ENCODE measurements at regions of chr10 and their contacts with region 1.

Region 1: DNA sequence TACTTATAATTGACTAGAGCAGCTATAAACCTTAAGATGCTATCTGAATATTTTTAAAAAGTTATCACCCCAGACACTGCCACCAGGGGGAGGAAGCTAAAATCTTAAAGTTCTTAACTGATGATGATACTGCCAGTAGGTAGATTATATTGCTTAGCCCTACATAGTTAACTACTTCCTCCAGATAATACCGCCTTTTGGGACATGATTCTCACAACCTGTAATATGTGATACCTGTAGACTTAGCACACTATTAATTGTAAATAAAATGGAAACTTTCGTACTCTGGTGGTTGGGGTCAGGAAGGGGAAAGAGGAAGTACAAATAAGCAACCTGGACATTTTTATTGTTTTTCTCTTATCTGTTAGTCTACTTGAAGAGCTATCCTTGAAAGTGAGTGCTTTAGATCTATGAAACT is 268.9 kb downstream of the ADK start:
- DNase-seq: peak; percentile 19 to 53 (median 44)
- ATAC-seq: peak; percentile 60
- H3K4me3 ChIP-seq: no peak overlapping the region
- H3K27ac ChIP-seq: no peak overlapping the region
- H3K4me1 ChIP-seq: peaks cover 4 to 15% of the 10 kb centered on the region in 2 experiments; a peak in 3 of 5 replicates
- H3K27me3 ChIP-seq: no peaks in the 10 kb centered on the region
- CTCF ChIP-seq: peak in 2 of 3 experiments; percentile 22 to 51; a peak in 2 of 6 replicates
- EP300 ChIP-seq: no peak
- POLR2A ChIP-seq: no peak
- RAD21 ChIP-seq: peak in 1 of 2 experiments; percentile 28; a peak in 1 of 4 replicates

Region 2: GRCh38 chr10:74432841-74433594 is 13.1 kb after region 1 on chr10:
- CTCF ChIA-PET with region 1: no interaction called
- POLR2A ChIA-PET with region 1: interaction called, 24 read pairs
- in situ Hi-C with region 1: no loop called
- intact Hi-C with region 1: no loop called
- DNase-seq: peak in 3 of 4 experiments; percentile 15 to 33 (median 23)
- ATAC-seq: no peak; the same call in 2 of the 3 replicates
- H3K4me3 ChIP-seq: no peak overlapping the region
- H3K27ac ChIP-seq: no peak overlapping the region
- H3K4me1 ChIP-seq: peaks cover 0 to 4% of the 10 kb centered on the region in 2 experiments; a peak in 3 of 5 replicates
- H3K27me3 ChIP-seq: no peaks in the 10 kb centered on the region
- CTCF ChIP-seq: no peak
- EP300 ChIP-seq: no peak
- POLR2A ChIP-seq: no peak
- RAD21 ChIP-seq: no peak

Region 3: DNA sequence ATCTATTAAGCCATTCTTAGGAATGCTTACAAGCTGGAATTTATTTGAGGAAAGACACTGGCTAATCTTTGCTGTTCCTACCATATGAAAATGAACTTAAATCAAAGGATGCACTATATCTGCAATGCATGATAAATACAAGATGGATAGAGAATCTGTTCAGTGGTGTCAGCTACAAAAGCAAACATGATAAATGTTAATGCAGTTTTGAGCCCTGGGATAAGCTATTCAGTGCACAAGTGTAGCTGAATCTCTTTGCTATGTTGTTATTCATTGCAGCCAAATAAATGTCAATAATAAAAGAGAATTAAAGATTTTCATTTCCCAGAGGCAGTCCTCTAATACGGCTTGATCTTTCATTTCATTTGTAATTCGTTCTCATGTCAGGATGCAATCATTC is 182.6 kb after region 1 on chr10:
- CTCF ChIA-PET with region 1: no interaction called
- POLR2A ChIA-PET with region 1: no interaction called
- in situ Hi-C with region 1: no loop called
- intact Hi-C with region 1: no loop called
- DNase-seq: no peak
- ATAC-seq: no peak
- H3K4me3 ChIP-seq: no peak overlapping the region
- H3K27ac ChIP-seq: no peak overlapping the region
- H3K4me1 ChIP-seq: no peaks in the 10 kb centered on the region
- H3K27me3 ChIP-seq: no peaks in the 10 kb centered on the region
- CTCF ChIP-seq: no peak
- EP300 ChIP-seq: no peak
- POLR2A ChIP-seq: no peak
- RAD21 ChIP-seq: no peak

Region 4: DNA sequence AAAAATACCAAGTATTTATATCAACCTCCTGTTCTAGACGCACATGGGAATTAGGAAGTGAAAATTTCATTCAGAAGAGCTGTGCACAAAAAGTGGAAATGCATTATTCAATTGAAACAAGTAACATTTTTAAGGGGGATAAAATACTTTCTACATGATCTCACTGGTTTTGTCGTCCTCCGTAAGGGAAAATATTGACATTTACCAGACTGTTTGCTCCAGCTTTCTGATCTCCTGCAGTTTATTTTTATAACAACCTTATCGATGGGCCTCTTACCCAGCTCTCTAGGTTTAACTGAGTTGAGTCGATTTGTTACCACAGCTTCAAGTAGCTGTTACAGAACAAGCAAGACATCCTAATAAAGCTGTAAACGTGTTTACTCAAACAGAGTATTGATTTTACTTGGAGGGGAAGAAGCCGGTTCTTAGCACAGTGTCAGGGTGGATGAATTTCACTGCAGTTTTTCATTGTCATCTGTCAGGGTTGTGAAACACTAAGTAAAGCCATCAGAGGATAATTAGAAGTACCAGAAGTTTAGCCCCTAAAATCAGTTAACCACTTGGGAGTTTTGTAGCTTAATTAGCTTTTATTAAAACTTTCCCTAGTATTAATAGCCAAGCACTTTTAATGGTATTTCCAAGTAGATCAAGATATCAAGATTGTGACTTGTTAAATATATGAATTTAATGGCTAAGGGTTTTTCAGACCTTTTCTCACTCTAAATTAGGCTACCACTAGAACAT is 263.8 kb after region 1 on chr10:
- CTCF ChIA-PET with region 1: no interaction called
- POLR2A ChIA-PET with region 1: no interaction called
- in situ Hi-C with region 1: no loop called
- intact Hi-C with region 1: no loop called
- DNase-seq: no peak
- ATAC-seq: no peak
- H3K4me3 ChIP-seq: no peak overlapping the region
- H3K27ac ChIP-seq: no peak overlapping the region
- H3K4me1 ChIP-seq: no peaks in the 10 kb centered on the region
- H3K27me3 ChIP-seq: no peaks in the 10 kb centered on the region
- CTCF ChIP-seq: no peak
- EP300 ChIP-seq: no peak
- POLR2A ChIP-seq: no peak
- RAD21 ChIP-seq: no peak